ENCODE measurements at regions of chr3 and their contacts with region 1.

Region 1: GRCh38 chr3:138186803-138187295 is 252 bp upstream of the ARMC8 start:
- DNase-seq: peak; percentile 82
- H3K4me3 Mint-ChIP-seq: peak overlapping the region; percentile 95
- H3K27ac Mint-ChIP-seq: peak overlapping the region; percentile 89
- H3K4me1 Mint-ChIP-seq: peaks cover 38% of the 10 kb centered on the region
- H3K27me3 Mint-ChIP-seq: peaks cover 5% of the 10 kb centered on the region

Region 2: GRCh38 chr3:138174421-138175122 is 12.3 kb before region 1 on chr3 and contains the start of gene DBR1:
- intact Hi-C with region 1: loop called (anchors 1 kb)
- DNase-seq: peak; percentile 68
- H3K4me3 Mint-ChIP-seq: peak within 1 kb of the TSS; percentile 98
- H3K27ac Mint-ChIP-seq: peak within 1 kb of the TSS; percentile 94
- H3K4me1 Mint-ChIP-seq: peaks cover 42% of the 10 kb centered on the region
- H3K27me3 Mint-ChIP-seq: peaks cover 7% of the 10 kb centered on the region
- total RNA-seq, gene DBR1: 25.7 and 31.0 TPM in 2 replicates

Region 3: DNA sequence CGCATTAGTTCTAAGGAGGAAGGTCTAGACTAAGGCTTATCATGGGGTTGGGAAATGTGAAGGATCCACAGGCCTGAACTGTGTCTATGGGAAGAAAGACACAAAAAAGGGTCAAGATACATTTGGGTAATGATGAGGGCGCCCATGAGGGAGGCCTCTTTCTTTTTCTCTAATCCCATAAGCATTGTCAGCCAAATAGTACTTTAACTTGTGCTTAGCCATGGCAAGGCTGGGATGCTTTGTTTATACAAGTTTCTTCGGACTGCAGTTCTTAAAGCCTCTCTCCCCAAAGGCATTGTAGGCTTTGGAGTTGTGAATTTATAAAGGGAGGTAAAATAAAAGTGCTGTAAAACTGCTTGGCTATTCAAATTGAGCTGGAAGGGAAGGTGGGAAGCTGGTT is 23.7 kb after region 1 on chr3:
- intact Hi-C with region 1: no loop called
- DNase-seq: no peak
- H3K4me3 Mint-ChIP-seq: no peak overlapping the region
- H3K27ac Mint-ChIP-seq: no peak overlapping the region
- H3K4me1 Mint-ChIP-seq: no peaks in the 10 kb centered on the region
- H3K27me3 Mint-ChIP-seq: no peaks in the 10 kb centered on the region

Region 4: DNA sequence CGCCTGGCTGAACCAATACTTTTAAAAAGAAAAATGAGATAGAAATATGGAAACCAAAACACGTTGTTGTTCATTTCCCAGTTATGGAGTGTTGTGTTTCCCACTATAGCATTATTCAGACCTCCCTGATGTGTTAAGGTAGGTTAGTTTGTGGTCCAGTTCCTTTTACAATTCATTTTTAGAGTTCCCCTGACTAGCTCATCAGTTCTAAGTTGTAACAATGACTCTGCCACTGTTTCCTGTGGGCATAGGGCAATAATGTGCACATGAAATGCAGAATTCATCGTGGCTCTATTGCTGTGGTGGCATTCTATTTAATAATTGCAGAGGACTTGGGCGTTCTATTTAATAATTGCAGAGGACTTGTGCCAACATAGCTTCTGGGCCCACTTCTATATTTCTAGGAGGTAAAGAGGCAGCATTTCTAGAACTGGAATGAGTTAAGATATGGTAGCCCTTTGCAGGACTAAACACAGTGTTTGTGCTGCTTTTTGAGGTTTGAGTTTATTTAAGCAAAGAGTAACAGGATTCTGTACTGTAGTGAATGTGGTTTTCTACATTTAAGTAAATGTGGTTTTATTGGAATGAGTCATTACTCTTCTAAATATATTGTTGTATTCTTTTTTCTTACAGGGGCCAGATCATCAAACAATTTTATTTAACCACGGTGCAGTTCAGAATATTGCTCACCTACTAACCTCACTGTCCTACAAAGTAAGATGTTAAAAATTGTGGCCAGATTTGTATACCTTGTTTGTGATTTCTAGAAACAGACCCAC is 47.7 kb after region 1 on chr3:
- intact Hi-C with region 1: loop called (anchors 5 kb)
- DNase-seq: no peak
- H3K4me3 Mint-ChIP-seq: no peak overlapping the region
- H3K27ac Mint-ChIP-seq: no peak overlapping the region
- H3K4me1 Mint-ChIP-seq: peaks cover 10% of the 10 kb centered on the region
- H3K27me3 Mint-ChIP-seq: no peaks in the 10 kb centered on the region

Region 5: DNA sequence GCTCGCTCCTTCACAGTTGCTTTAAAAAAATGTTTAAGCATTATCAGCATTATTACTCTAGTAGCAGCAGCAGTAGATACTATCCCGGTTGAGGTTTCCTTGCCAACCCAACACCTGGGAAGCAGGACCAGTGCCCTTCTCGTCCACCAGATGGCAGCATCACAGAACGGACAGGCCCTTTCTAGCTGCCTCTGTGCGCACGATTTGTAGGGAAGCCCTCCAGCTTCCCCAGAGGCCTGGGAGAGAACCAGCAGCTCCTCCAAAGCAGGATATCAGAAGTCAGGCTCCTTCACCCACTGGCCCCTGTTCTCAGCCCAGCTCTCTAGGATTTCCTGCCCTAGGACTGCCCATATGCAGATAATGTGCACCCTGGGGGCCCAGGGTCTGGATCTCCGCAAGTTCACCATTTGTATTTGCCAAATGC is 230.7 kb after region 1 on chr3:
- intact Hi-C with region 1: loop called (anchors 5 kb)
- DNase-seq: peak; percentile 42
- H3K4me3 Mint-ChIP-seq: no peak overlapping the region
- H3K27ac Mint-ChIP-seq: no peak overlapping the region
- H3K4me1 Mint-ChIP-seq: no peaks in the 10 kb centered on the region
- H3K27me3 Mint-ChIP-seq: peaks cover 13% of the 10 kb centered on the region

Region 6: DNA sequence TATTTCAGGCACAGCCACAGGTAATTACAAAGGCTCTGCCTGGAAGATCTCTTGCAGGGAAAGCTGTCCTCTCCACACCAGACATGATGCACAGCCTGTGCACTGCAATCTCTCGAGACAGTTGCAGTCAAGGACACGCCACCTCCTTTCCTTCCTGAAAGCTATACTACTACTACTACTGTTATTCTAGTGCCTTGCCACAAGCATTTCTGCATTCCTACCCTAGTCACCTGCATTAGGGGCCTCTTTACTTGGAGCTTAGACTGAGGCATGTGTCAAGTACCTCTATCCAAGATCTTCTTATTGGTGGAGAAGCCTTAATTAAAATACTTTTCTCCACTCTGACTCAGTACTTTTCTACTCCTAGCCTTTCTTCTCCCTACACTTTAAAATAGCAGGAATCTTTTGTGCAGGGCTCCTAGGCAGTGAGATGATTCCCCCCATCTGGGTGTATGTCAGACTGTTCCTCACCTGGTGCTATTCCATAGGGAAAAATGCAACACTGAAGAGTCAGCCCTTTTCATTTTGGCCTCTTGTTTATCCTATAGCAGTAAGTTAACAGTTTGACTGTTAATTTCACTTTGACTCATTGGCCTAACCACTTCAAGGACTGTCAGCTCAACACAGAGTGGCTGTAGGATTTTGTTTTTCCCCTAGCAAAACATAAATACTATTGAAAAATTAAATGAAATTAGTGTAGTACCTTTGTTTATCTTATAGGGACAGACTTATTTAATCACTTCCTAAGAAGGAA is 326.4 kb after region 1 on chr3:
- intact Hi-C with region 1: loop called (anchors 5 kb)
- DNase-seq: peak; percentile 3
- H3K4me3 Mint-ChIP-seq: peak overlapping the region; percentile 37
- H3K27ac Mint-ChIP-seq: peak overlapping the region; percentile 13
- H3K4me1 Mint-ChIP-seq: peaks cover 28% of the 10 kb centered on the region
- H3K27me3 Mint-ChIP-seq: no peaks in the 10 kb centered on the region

Region 7: DNA sequence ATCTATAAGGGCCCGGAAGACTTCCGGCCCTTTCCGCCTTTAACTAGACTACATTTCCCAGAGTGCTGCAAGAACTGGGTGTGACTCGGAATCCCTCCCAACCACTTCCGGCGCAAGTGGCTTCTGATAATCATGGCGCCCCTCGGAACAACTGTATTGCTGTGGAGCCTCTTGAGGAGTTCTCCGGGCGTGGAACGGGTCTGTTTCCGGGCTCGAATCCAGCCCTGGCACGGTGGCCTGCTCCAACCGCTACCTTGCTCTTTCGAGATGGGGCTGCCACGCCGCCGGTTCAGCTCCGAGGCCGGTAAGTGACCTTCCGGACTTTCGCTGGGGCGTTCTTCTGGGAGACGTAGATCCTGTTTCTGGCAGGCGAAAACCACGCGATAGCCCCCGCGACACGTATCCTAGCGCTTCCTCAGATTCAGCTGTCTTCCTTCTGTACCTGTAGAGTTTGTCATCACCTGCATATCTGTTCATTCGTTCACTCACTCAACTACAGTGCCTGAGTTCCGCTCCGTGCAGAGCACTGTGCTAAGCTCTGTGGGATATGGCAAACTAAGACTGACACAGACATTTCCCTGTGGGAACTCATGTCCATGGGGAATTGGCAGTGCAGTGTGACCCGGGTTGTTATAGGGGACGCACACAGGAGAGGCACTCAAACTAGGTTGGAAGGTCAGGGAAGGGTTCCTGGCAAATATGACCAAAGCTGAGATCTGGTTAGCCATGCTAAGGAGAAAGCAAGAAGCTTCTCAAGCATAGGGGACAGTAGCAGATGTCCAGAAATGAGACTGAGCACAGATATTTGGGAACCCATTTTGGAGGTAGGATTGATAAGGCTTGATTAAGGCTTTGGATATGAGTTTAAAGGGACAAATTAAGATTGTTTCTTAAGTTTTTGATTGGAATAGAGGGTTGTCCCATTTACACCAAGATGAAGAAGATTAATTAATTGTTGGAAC is 1157.3 kb after region 1 on chr3 and contains the start of gene MRPS22:
- intact Hi-C with region 1: loop called (anchors 5 kb)
- DNase-seq: peak; percentile 79
- H3K4me3 Mint-ChIP-seq: no peak within 1 kb of the TSS
- H3K27ac Mint-ChIP-seq: peak within 1 kb of the TSS; percentile 87
- H3K4me1 Mint-ChIP-seq: peaks cover 14% of the 10 kb centered on the region
- H3K27me3 Mint-ChIP-seq: peaks cover 3% of the 10 kb centered on the region
- total RNA-seq, gene MRPS22: 48.4 and 54.7 TPM in 2 replicates

Measured in activated T-helper 1 cell treated with anti-CD3 and anti-CD28 coated beads, Interleukin-12 subunit alpha, Interleukin-12 subunit beta, Interleukin-2, Interleukin-4 antibody, amounts not matched to agents 30 ng/mL and 10 ng/mL and 1 ng/mL, durations not matched to agents 14 hours and 24 hours and 36 hours (primary cell).